ENCODE measurements at regions of chr15 and their contacts with region 1.

Region 1: DNA sequence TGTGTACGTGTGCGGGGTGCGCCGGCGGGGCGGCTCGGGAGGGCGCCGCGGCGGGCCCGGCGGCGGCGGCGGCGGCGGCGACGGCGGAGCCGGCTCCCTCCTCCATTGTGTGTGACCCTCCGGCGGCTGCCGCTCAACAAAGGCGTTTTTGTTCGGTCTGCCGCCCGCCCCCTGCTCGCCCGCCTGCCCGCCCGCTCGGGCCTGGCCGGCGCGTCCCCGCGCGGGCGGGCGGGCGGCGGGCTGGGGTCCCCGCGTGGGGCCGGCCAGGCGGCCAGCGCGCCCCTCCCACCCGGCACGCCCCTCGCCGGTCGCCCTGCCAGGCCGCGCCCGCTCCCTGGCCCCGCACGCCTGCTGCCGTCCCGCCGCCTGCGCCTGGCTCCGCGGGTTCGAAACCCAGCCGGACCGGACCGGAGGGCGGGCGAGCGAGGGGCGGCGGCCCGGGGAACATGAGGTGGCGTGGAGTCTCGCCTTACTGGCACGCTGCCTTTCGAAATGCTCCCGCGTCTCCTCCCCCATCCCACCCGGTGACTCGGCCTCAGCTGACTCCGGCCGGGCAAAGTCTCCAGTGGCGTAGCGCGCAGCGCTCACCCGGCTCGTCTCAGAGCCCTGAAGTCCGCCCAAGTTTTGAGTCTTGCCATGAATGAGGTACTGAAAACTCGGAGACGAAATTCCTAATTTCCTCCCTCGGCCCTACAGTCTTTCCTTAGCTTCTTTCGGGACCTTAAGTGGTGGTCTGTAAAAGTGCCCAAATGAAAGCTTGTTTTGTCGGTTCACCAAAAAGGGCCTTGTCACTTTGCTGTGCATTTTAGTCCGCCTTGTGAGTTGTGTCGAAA is 585 bp downstream of the MAPK6 start:
- DNase-seq: peak; percentile 93 to 96
- ATAC-seq: peak; percentile 87
- H3K4me3 ChIP-seq: peak overlapping the region; percentile 95 to 99
- H3K27ac ChIP-seq: peak overlapping the region; percentile 96 to 98
- H3K4me1 ChIP-seq: no peaks in the 10 kb centered on the region
- H3K27me3 ChIP-seq: no peaks in the 10 kb centered on the region

Region 2: GRCh38 chr15:51971375-51972133 is 48.0 kb before region 1 on chr15 and contains the start of gene LEO1:
- intact Hi-C with region 1: loop called in 1 of 2 experiments (anchors 2 kb)
- DNase-seq: peak; percentile 92 to 93
- ATAC-seq: peak; percentile 99
- H3K4me3 ChIP-seq: peak within 1 kb of the TSS; percentile 56 to 66
- H3K27ac ChIP-seq: peak within 1 kb of the TSS in 1 of 2 donors; percentile 38
- H3K4me1 ChIP-seq: peaks cover 0 to 4% of the 10 kb centered on the region in 2 donors
- H3K27me3 ChIP-seq: no peaks in the 10 kb centered on the region
- total RNA-seq, gene LEO1: 8.4 to 9.5 TPM

Region 3: DNA sequence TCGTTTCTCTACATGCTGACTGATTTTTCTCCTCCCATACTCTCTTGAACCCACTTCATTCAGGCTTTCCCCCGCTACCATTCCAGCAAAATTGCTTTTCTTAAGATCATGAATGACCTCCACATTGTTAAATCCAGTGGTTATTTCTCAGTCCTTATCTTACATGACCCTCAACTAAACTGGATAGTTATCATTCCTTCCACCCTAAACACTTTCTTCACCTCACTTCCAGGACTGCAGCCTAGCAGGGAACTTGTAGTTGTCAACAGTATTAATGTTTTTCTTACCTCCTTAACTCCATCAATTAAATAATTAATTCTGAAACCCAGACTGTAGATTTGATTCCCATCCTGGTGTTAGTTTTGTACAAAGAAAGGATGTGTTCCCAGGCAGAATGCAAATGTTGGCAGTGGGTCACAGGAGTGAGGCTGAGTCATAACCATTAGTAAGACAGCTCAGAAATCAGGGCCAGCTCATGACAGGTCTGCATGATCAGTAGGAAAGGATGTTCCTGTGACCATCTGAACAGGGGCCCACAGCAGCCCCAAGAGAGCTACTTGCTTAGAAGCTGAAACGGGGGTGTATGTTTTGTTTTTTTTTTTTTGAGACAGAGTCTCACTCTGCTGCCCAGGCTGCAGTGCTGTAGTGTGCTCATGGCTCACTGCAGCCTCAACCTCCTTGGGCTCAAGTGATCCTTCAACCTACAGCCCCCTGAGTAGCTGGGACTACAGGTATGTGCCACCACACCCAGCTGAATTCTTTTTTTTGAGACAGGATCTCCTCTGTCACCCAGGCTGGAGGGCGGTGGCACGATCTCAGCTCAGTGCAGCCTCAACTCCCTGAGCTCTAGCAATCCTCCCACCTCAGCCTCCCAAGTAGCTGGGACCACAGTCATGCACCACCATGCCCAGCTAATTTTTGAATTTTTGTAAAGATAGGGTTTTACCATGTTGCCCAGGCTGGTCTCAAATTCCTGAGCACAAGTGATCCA is 83.9 kb after region 1 on chr15:
- intact Hi-C with region 1: no loop called
- DNase-seq: peak in 1 of 2 donors; percentile 74
- ATAC-seq: peak; percentile 68
- H3K4me3 ChIP-seq: no peak overlapping the region
- H3K27ac ChIP-seq: no peak overlapping the region
- H3K4me1 ChIP-seq: no peaks in the 10 kb centered on the region
- H3K27me3 ChIP-seq: no peaks in the 10 kb centered on the region

Region 4: GRCh38 chr15:52288051-52288942 is 268.7 kb after region 1 on chr15:
- intact Hi-C with region 1: no loop called
- DNase-seq: no peak
- ATAC-seq: peak; percentile 29
- H3K4me3 ChIP-seq: no peak overlapping the region
- H3K27ac ChIP-seq: no peak overlapping the region
- H3K4me1 ChIP-seq: no peaks in the 10 kb centered on the region
- H3K27me3 ChIP-seq: no peaks in the 10 kb centered on the region